ENCODE measurements at regions of chr14 and their contacts with region 1.

Region 1: GRCh38 chr14:104976198-104977007 is 1.8 kb downstream of the AHNAK2 start:
- DNase-seq: peak; percentile 78 to 96 (median 91)
- ATAC-seq: peak; percentile 67 to 72 (median 69)
- H3K4me3 ChIP-seq: no peak overlapping the region
- H3K27ac ChIP-seq: no peak overlapping the region
- H3K4me1 ChIP-seq: peaks cover 25 to 56% (median 25%) of the 10 kb centered on the region in 3 donors
- H3K27me3 ChIP-seq: no peaks in the 10 kb centered on the region
- CTCF ChIP-seq: peak; percentile 82 to 95 (median 88)

Region 2: GRCh38 chr14:105045710-105046326 is 69.4 kb after region 1 on chr14:
- intact Hi-C with region 1: loop called in 2 of 3 experiments (anchors 2 to 5 kb)
- DNase-seq: peak; percentile 75 to 98 (median 90)
- ATAC-seq: peak; percentile 87 to 97 (median 94)
- H3K4me3 ChIP-seq: no peak overlapping the region
- H3K27ac ChIP-seq: no peak overlapping the region
- H3K4me1 ChIP-seq: no peaks in the 10 kb centered on the region
- H3K27me3 ChIP-seq: no peaks in the 10 kb centered on the region
- CTCF ChIP-seq: peak; percentile 99 to 100 (median 100)